Activated T-helper 2 cell treated with anti-CD3 and anti-CD28 coated beads, Interferon-gamma antibody, Interleukin-2, Interleukin-4, amounts not matched to agents 10 μg/mL and 5 μg/mL and 100 μg/mL, durations not matched to agents 14 hours and 24 hours and 36 hours (primary cell): ENCODE measurements at regions of chrX and their contacts with region 1.

Region 1: GRCh38 chrX:45710081-45710801 is 509.6 kb upstream of the DIPK2B start:
- DNase-seq: peak; percentile 12
- H3K4me3 Mint-ChIP-seq: no peak overlapping the region
- H3K27ac Mint-ChIP-seq: peak overlapping the region; percentile 87
- H3K4me1 Mint-ChIP-seq: peaks cover 44% of the 10 kb centered on the region
- H3K27me3 Mint-ChIP-seq: no peaks in the 10 kb centered on the region

Region 2: DNA sequence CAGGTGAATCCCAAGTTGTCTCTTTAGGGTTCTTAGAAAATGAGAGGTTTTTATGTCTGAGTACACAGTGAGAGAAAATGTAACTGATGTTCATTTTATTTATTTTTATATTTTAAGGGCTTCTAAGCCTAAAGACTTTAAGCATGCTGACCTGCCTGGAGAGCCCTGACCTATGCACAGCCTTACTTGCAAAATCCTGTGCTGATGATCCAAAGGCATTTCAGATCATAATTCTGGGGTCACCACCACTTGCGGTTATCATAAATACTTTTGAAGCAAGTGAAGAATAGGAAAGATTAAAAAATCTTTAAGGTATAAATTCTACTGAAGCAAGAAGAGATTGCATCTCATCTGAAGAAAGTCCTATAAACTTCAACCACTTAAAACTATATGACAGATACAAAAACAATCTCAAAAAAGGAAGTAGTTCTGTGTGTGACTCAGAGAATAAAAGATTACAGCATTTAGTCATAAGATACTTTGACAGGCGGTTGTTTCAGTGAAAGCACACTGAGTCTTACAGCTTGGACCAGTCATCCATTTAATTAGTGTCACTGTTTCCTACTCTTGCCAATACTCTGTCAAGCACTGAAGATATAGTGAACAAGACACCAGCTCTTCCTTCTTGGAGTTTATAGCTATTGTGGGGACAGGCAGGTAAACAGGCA is 264.4 kb before region 1 on chrX:
- intact Hi-C with region 1: loop called (anchors 5 kb)
- DNase-seq: no peak
- H3K4me3 Mint-ChIP-seq: no peak overlapping the region
- H3K27ac Mint-ChIP-seq: no peak overlapping the region
- H3K4me1 Mint-ChIP-seq: peaks cover 6% of the 10 kb centered on the region
- H3K27me3 Mint-ChIP-seq: peaks cover 1% of the 10 kb centered on the region

Region 3: DNA sequence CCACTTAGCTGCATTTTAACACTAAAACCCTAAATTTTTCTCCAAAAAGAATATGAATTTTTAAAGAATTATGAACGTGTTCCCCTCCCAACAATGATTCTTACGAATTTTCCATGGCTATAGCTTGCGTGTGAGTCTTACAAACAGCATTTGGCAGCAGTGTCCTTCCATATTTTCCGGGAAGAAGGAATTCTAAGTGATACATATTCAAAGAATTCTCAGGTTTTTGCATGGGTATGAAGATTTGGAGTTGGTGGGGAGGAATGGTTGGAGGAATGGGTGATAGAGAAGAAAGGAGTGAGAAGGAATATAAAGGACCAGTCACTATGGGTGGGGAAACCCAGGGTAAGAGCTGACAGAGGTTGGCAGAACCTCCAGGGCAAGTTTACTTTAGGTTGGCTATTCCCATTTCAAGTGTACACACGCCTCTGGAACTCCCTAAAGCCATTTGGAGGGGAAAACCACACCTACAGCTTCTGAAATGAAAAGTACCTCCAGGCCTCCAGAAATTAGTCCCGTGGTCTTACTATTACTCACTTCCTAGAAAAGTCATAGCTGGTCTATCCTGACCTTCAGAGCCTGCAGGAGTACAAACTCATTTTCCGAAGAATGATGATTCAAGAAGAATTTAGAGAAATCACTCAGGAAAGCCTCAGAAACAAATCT is 88.7 kb before region 1 on chrX:
- intact Hi-C with region 1: loop called (anchors 1 kb)
- DNase-seq: no peak
- H3K4me3 Mint-ChIP-seq: no peak overlapping the region
- H3K27ac Mint-ChIP-seq: peak overlapping the region; percentile 80
- H3K4me1 Mint-ChIP-seq: peaks cover 18% of the 10 kb centered on the region
- H3K27me3 Mint-ChIP-seq: no peaks in the 10 kb centered on the region

Region 4: DNA sequence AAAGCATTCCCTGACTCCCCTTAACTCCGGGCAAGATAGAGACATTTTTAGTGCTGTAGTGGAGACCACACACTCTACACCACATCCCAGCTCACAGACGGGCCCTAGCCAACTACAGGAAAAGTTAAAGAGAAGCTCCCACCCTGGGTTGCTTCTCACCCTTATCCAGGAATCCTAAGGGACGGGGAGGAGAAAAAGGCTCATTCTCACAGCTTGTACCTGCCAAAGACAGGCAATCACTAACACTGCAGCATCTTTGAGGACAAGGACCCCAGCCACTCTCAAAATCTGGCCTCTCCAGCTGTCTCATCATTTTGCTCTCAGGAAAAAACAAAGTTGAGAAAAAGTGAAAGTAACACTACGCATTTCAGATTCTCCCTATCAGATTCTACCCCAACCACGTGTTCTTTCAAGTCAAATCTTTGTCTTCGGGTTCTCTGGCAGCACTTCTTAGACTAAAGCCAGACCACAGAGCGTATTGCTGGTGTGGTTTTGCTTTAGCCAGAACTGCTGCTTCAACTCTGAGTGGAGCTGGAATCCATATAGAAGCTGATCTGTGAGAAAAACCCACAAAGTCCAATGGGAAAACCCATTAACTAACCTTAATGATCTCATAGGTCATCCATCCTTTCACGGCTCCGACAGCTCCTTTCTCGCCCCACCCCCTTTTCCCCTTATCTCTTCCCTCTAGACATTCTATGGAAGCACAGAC is 96.3 kb after region 1 on chrX:
- intact Hi-C with region 1: loop called (anchors 1 kb)
- DNase-seq: peak; percentile 42
- H3K4me3 Mint-ChIP-seq: peak overlapping the region; percentile 74
- H3K27ac Mint-ChIP-seq: peak overlapping the region; percentile 91
- H3K4me1 Mint-ChIP-seq: peaks cover 79% of the 10 kb centered on the region
- H3K27me3 Mint-ChIP-seq: no peaks in the 10 kb centered on the region

Region 5: GRCh38 chrX:45823536-45823935 is 113.3 kb after region 1 on chrX:
- intact Hi-C with region 1: no loop called
- DNase-seq: no peak
- H3K4me3 Mint-ChIP-seq: no peak overlapping the region
- H3K27ac Mint-ChIP-seq: peak overlapping the region; percentile 7
- H3K4me1 Mint-ChIP-seq: peaks cover 30% of the 10 kb centered on the region
- H3K27me3 Mint-ChIP-seq: no peaks in the 10 kb centered on the region

Region 6: GRCh38 chrX:46279925-46280313 is 569.7 kb after region 1 on chrX:
- intact Hi-C with region 1: loop called (anchors 2 kb)
- DNase-seq: no peak
- H3K4me3 Mint-ChIP-seq: no peak overlapping the region
- H3K27ac Mint-ChIP-seq: peak overlapping the region; percentile 90
- H3K4me1 Mint-ChIP-seq: peaks cover 21% of the 10 kb centered on the region
- H3K27me3 Mint-ChIP-seq: no peaks in the 10 kb centered on the region